IMR-90 (cell line): ENCODE measurements at regions of chr11 and their contacts with region 1.

Region 1: GRCh38 chr11:22539821-22540256 is 85.8 kb downstream of the FANCF start:
- DNase-seq: peak; percentile 28
- ATAC-seq: peak; percentile 62
- H3K4me3 ChIP-seq: no peak overlapping the region
- H3K27ac ChIP-seq: no peak overlapping the region
- H3K4me1 ChIP-seq: no peaks in the 10 kb centered on the region
- H3K27me3 ChIP-seq: no peaks in the 10 kb centered on the region
- CTCF ChIP-seq: peak; percentile 53
- POLR2A ChIP-seq: no peak
- RAD21 ChIP-seq: peak; percentile 58

Region 2: GRCh38 chr11:22337596-22338485 is 202.0 kb before region 1 on chr11 and contains the start of gene SLC17A6:
- CTCF ChIA-PET with region 1: interaction called, 6 read pairs
- POLR2A ChIA-PET with region 1: no interaction called
- dilution Hi-C with region 1: no loop called
- in situ Hi-C with region 1: no loop called
- intact Hi-C with region 1: loop called (anchors 1 kb)
- DNase-seq: peak; percentile 8
- ATAC-seq: no peak
- H3K4me3 ChIP-seq: no peak within 1 kb of the TSS
- H3K27ac ChIP-seq: no peak within 1 kb of the TSS
- H3K4me1 ChIP-seq: no peaks in the 10 kb centered on the region
- H3K27me3 ChIP-seq: peaks cover 26% of the 10 kb centered on the region
- CTCF ChIP-seq: no peak
- POLR2A ChIP-seq: no peak
- RAD21 ChIP-seq: no peak
- total RNA-seq, gene SLC17A6: not detected in 2 replicates

Region 3: DNA sequence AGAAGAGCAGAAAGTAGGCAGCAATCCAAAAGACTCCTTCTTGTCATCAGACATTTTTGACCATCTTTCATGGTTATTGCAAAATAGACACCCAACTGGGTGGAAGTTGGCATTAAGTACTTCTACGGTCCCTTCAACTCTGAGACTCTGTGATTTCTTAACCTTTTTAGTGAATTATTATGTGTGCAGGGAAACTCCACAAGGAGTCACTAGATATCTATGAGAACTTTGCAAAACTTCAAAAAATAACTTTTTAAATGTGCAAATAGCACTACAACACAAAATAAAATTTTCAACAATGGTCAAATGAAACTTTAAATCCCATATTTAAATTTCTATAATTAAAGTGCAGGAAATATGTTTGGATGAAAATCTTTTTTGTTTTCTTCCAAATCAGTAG is 112.9 kb before region 1 on chr11:
- CTCF ChIA-PET with region 1: no interaction called
- POLR2A ChIA-PET with region 1: no interaction called
- dilution Hi-C with region 1: no loop called
- in situ Hi-C with region 1: no loop called
- intact Hi-C with region 1: loop called (anchors 1 kb)
- DNase-seq: peak; percentile 7
- ATAC-seq: no peak
- H3K4me3 ChIP-seq: no peak overlapping the region
- H3K27ac ChIP-seq: no peak overlapping the region
- H3K4me1 ChIP-seq: no peaks in the 10 kb centered on the region
- H3K27me3 ChIP-seq: no peaks in the 10 kb centered on the region
- CTCF ChIP-seq: peak; percentile 45
- POLR2A ChIP-seq: no peak
- RAD21 ChIP-seq: peak; percentile 46